HCT116 (cell line): ENCODE measurements at regions of chr15 and their contacts with region 1.

Region 1: DNA sequence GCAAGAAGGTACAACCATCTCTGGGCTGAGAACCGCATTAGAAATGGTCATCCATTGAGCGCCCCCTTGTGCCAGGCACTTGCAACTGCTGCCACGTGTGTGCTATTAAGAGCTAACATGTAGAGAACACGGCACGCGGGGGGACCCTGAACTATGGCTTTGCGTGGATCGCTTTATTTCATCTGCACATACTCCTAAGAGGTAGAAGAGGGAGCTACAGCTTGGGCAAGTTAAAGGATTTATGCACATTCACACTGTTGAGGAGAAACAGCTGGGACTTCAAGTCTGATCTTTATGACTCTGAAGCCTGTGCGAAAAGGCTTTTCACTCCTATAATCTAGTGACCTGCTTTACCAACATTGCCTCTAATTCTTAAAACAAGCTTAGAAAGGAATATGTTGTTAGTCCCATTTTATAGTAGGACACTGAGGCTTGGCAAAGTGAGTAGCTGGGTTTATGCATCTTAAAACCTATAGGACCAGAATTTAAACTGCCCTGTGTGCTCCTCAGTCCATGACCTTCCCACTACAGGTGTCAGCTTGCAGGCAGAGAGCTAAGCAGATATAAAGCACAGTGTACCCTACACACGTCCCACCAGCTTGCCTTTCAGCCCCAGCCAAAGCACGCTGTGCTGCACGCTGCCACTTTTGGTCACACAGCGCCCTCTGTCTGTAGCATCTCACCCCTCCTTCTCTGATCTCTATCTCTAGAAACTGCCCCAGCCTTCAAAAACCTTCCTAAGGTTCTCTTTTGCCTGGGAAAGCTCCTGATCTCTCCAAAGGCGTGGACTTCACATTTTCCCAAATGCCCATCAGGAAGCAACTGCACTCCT is 57.8 kb downstream of the STARD5 start:
- DNase-seq: peak; percentile 74
- ATAC-seq: peak; percentile 95
- H3K4me3 ChIP-seq: peak overlapping the region; percentile 10 to 25; a peak in 3 of 4 replicates
- H3K27ac ChIP-seq: no peak overlapping the region
- H3K4me1 ChIP-seq: peaks cover 5 to 10% of the 10 kb centered on the region in 2 experiments
- H3K27me3 ChIP-seq: no peaks in the 10 kb centered on the region
- CTCF ChIP-seq: peak; percentile 86 to 95 (median 92)
- POLR2A ChIP-seq: no peak
- RAD21 ChIP-seq: peak; percentile 92

Region 2: DNA sequence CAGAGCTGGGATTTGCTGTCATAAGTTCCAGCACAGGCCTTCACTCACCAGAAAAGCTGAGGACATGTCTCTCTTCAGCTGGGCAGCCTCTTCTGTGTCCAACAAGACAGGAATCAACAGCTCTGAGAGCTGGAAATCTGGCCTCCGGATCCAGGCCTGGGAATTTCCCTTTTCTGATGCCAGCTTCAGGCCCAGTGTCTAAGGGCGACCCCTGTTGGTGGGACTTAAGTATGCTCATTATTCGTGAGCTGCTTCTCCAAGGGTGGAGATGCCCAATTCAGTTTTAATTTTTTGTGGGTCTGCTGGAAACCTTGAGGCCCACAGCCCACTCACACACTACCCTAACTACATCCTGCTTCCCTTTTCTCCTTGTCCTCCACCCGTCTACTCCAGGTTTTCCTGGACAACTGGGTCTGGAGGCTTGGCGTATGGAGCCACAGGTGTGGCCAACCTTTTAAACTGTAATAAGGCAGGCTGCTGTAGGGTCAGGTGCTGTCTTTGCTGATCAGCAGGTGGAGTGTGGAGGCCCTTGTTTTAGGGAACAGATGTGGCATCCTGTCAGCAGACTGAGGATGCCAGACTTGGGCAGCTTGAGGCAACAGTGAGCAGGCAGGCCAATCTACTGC is 489.6 kb before region 1 on chr15:
- CTCF ChIA-PET with region 1: interaction called, 34 read pairs
- POLR2A ChIA-PET with region 1: no interaction called
- RAD21 ChIA-PET with region 1: no interaction called
- intact Hi-C with region 1: loop called (anchors 5 kb)
- DNase-seq: peak; percentile 66
- ATAC-seq: peak; percentile 52
- H3K4me3 ChIP-seq: no peak overlapping the region
- H3K27ac ChIP-seq: no peak overlapping the region
- H3K4me1 ChIP-seq: peaks cover 4 to 19% of the 10 kb centered on the region in 2 experiments; a peak in 2 of 4 replicates
- H3K27me3 ChIP-seq: no peaks in the 10 kb centered on the region
- CTCF ChIP-seq: peak; percentile 74 to 94 (median 90)
- POLR2A ChIP-seq: no peak
- RAD21 ChIP-seq: peak; percentile 93

Region 3: DNA sequence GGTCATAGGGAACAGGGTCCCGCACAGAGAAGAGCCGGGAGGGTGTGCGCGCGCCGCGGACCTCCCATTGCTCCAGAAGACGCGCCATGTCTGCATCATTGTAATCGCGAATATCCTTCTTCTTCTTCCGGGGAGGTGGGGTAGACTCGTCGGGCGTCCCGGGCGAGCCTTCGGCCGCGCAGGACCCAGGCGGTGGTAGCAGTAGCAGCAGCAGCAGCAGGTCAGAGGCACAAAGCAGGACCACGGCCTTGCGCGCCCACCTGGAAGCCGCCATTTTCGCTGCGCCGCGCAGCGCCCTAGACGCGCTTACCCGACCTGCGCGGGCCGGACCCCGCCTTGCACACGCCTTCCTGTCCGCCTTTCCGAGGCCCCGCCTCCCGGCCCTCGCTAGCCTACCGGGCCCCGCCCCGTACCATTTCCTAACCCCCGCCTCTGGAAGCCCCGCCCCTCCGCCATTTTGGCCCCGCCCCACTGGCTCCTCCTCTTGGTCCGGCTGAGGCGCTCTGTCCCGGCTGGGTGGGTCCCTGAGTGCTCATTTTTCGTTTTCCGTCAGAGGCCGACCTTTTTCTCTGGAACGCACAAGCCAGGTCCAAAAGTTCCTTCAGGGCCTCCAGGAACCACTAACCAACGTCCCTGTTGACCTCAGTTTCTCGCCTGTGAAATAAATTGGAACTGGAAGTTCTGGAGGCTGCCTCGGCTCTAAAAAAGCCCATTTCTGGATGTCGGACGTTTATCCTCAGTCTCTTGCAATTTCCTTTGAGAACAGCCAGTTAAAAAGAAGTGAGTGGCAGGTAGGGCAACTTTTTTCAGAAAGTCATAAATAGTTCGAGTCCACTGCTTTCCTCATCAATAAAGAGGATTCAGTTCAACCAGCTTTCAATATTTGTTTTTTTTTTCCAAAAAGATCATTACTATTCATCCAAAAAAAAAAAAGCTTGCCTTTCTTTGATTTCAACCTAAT is 276.4 kb before region 1 on chr15 and contains the start of gene MESD:
- CTCF ChIA-PET with region 1: interaction called, 14 read pairs
- POLR2A ChIA-PET with region 1: no interaction called
- RAD21 ChIA-PET with region 1: no interaction called
- intact Hi-C with region 1: no loop called
- DNase-seq: peak; percentile 85
- ATAC-seq: peak; percentile 98
- H3K4me3 ChIP-seq: peak within 1 kb of the TSS; percentile 97 to 100
- H3K27ac ChIP-seq: peak within 1 kb of the TSS; percentile 77
- H3K4me1 ChIP-seq: peaks cover 13 to 29% of the 10 kb centered on the region in 2 experiments; a peak in 3 of 4 replicates
- H3K27me3 ChIP-seq: no peaks in the 10 kb centered on the region
- CTCF ChIP-seq: no peak
- POLR2A ChIP-seq: peak; percentile 89
- RAD21 ChIP-seq: no peak
- total RNA-seq, gene MESD: 22.5 TPM

Region 4: DNA sequence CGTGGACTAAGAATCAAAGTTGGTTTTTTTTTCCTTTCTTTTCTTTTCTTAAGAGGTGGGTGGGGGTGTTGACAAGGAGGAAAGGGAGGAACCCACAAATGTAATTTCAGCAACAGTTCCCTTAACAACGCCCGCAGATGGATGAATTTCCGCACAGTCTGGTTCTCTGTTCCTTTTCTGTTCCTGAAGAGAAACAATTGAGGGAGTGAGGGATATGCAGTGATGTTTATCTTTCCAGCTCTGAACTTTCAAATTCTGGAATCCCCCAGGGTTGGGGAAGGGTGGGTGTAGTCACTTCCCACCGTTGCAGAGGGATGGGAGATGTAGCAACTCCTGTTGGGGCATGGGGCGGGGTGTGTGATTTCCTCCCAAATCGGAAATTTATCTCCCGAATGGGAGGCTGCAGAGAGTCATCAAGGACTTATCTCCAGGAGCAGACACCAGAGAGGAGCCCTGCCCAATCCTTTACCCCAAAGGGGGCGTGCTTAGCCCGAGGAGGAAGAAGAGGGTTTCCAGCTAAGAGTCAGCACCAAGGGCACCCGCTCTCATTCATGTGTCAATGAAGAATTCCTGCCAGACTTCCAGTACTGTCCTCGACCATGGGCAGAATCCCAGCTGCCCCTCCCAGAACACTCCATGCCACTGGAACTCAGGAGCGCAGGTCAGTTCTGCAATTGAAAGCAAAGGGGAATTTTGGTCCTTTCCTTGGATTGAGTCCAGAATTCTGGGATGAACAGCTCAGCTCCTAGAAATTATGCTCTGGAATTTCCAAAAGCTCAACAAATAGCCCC is 167.1 kb before region 1 on chr15:
- CTCF ChIA-PET with region 1: interaction called, 175 read pairs
- POLR2A ChIA-PET with region 1: interaction called, 3 read pairs
- RAD21 ChIA-PET with region 1: no interaction called
- intact Hi-C with region 1: no loop called
- DNase-seq: no peak
- ATAC-seq: no peak
- H3K4me3 ChIP-seq: no peak overlapping the region
- H3K27ac ChIP-seq: no peak overlapping the region
- H3K4me1 ChIP-seq: peaks cover 0 to 10% of the 10 kb centered on the region in 2 experiments; a peak in 2 of 4 replicates
- H3K27me3 ChIP-seq: no peaks in the 10 kb centered on the region; the same call in 1 of the 2 replicates
- CTCF ChIP-seq: no peak
- POLR2A ChIP-seq: no peak
- RAD21 ChIP-seq: no peak

Region 5: DNA sequence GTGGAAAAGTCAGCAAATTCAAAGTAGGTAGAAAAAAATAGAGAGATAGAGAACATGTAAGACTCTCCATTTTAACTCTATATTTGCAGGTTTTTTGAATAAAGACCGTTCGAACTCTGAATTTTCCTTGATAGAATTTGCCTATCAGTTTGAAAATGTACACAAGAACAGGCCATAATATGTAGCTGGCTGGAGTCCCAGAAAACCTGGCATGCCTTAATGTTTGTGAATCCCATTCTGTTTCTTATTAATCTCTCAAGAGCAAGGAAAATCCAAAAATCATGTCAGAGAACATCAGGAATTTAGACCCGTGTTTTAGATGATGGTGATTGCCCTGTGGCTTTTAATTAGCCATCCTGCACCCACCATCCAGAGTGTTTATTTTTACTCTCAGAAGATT is 139.3 kb before region 1 on chr15:
- CTCF ChIA-PET with region 1: interaction called, 11 read pairs
- POLR2A ChIA-PET with region 1: no interaction called
- RAD21 ChIA-PET with region 1: no interaction called
- intact Hi-C with region 1: no loop called
- DNase-seq: no peak
- ATAC-seq: no peak
- H3K4me3 ChIP-seq: no peak overlapping the region
- H3K27ac ChIP-seq: no peak overlapping the region
- H3K4me1 ChIP-seq: no peaks in the 10 kb centered on the region
- H3K27me3 ChIP-seq: peaks cover 3% of the 10 kb centered on the region; the same call in 1 of the 2 replicates
- CTCF ChIP-seq: no peak
- POLR2A ChIP-seq: no peak
- RAD21 ChIP-seq: no peak

Region 6: DNA sequence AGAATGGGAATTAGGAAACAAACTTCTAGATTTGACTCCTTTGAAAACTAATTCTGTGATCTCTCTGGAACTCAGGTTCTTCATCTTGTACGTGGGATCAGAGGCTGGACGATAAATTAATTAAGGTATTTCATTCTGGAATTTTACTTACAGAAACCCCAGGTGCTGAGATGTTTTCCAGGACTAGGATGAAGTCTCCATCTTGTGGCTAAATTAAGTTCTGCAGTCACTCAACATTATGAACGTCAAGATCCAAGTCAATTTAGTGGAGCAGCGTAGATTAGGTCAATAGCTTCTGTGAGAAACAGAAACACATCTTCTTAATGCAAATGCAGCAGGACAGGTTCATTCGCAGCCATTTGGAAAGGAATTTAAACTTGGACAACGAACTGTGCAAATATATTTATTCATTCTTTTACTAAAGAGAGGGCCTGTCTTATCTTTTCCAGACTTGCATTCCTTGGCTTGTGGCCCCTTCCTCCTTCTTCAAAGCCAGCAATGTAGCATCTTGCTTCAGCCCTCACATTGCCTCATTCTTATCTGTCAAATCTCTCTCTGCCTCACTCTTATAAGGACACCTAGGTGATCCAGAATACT is 134.6 kb after region 1 on chr15:
- CTCF ChIA-PET with region 1: interaction called, 17 read pairs
- POLR2A ChIA-PET with region 1: no interaction called
- RAD21 ChIA-PET with region 1: no interaction called
- intact Hi-C with region 1: no loop called
- DNase-seq: peak; percentile 52
- ATAC-seq: peak; percentile 67
- H3K4me3 ChIP-seq: no peak overlapping the region
- H3K27ac ChIP-seq: no peak overlapping the region
- H3K4me1 ChIP-seq: no peaks in the 10 kb centered on the region
- H3K27me3 ChIP-seq: no peaks in the 10 kb centered on the region
- CTCF ChIP-seq: peak; percentile 57 to 79 (median 67)
- POLR2A ChIP-seq: no peak
- RAD21 ChIP-seq: peak; percentile 85

Region 7: DNA sequence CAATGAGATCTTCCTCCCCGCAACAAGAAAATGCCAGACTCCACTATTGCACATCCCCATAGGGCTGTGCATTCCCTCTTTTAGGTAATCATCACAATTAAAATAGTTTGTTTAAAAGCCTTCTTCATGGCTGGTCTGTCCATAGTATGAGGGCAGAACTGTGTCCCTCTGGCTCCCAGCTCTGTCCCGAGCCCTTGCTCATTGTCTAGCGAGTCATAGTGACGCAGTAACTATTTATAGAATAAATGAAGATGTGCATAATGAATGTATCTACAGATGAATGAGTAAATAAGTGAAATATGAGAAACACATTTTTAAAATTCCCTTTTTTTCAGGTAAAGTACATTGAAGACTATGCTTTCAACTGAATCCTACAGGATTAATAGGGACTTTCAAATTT is 236.3 kb after region 1 on chr15:
- CTCF ChIA-PET with region 1: no interaction called
- POLR2A ChIA-PET with region 1: no interaction called
- RAD21 ChIA-PET with region 1: no interaction called
- intact Hi-C with region 1: no loop called
- DNase-seq: no peak
- ATAC-seq: no peak
- H3K4me3 ChIP-seq: no peak overlapping the region
- H3K27ac ChIP-seq: no peak overlapping the region
- H3K4me1 ChIP-seq: no peaks in the 10 kb centered on the region
- H3K27me3 ChIP-seq: peaks cover 19% of the 10 kb centered on the region
- CTCF ChIP-seq: no peak
- POLR2A ChIP-seq: no peak
- RAD21 ChIP-seq: no peak